Naive thymus-derived CD4-positive, alpha-beta T cell (primary cell): ENCODE measurements at regions of chr12 and their contacts with region 1.

Region 1: DNA sequence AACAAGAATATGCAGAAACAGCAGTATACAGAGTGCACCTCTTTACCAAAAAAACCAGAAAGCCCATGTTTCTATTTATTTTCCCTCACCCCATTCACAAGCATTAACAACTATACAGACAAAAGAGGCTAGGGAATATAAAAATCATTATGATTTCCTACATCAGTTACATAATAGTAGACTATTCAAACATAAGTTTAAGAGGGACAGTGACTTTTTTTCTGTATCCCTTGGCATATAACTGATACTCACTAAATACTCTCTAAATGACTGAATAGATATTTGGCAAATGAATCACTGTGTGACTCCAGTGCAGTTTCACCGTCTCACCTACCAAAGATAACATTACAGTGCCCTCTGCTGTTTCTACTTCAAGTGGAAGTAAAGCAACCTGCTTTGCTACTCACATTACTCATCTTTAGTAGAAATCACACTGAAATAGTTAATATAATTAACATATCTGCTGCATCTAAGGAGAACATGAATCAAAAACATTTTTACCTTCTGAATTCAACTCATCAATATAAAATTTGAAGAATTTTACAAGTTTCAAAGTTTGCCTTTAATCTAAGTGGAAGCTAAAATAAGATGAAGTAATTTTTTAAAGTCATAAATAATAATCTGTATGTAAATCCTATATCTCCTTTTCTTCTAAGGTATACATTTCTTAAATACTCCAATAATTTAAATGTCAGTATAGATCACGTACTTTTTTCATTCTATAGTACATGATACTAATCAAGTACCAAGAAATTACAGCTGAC is 103.8 kb downstream of the OSBPL8 start:
- DNase-seq: peak in 6 of 9 donors; percentile 15 to 49 (median 38)
- ATAC-seq: peak; percentile 78
- H3K4me3 ChIP-seq: no peak overlapping the region
- H3K4me3 Mint-ChIP-seq: peak overlapping the region in 1 of 10 donors; percentile 38
- H3K27ac ChIP-seq: no peak overlapping the region
- H3K27ac Mint-ChIP-seq: peak overlapping the region in 3 of 9 donors; percentile 36 to 65 (median 46)
- H3K4me1 ChIP-seq: peaks cover 14 to 16% of the 10 kb centered on the region in 2 donors
- H3K4me1 Mint-ChIP-seq: peaks cover 10 to 58% (median 37%) of the 10 kb centered on the region in 7 donors
- H3K27me3 ChIP-seq: no peaks in the 10 kb centered on the region
- H3K27me3 Mint-ChIP-seq: no peaks in the 10 kb centered on the region

Region 2: DNA sequence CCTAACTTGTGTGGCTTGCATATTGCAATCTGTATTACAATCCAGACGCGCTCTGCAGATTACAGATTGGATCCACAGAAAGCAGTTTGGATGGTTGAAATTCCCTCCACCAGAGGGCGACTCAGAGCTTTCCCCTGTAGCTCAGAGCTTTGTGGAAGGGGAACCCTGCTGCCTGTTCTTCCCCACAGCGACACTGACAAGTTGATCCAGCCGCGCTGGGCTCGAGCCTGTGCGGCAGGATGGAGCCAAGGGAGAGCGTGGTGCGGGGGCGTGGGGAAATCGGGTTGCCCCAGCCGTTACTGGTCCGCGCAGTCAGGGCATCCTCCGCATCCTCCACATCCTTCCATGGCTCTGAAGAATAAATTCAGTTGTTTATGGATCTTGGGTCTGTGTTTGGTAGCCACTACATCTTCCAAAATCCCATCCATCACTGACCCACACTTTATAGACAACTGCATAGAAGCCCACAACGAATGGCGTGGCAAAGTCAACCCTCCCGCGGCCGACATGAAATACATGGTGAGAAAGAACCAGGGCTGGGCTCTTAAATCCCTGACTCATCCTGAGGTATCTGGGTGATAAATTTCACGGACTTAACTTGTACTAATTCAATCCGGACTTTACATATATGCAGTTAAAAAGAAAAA is 1121.3 kb before region 1 on chr12 and contains the start of gene GLIPR1L1:
- CTCF ChIA-PET with region 1: no interaction called
- POLR2A ChIA-PET with region 1: no interaction called
- intact Hi-C with region 1: loop called in 1 of 2 experiments (anchors 5 kb)
- DNase-seq: peak; percentile 58 to 79 (median 74)
- ATAC-seq: peak; percentile 91
- H3K4me3 ChIP-seq: no peak within 1 kb of the TSS
- H3K4me3 Mint-ChIP-seq: peak within 1 kb of the TSS; percentile 18 to 80 (median 74)
- H3K27ac ChIP-seq: no peak within 1 kb of the TSS
- H3K27ac Mint-ChIP-seq: peak within 1 kb of the TSS in 1 of 9 donors; percentile 3
- H3K4me1 ChIP-seq: peaks cover 0 to 5% of the 10 kb centered on the region in 2 donors
- H3K4me1 Mint-ChIP-seq: peaks cover 11 to 29% (median 18%) of the 10 kb centered on the region in 7 donors
- H3K27me3 ChIP-seq: peaks cover 0 to 6% of the 10 kb centered on the region in 2 donors
- H3K27me3 Mint-ChIP-seq: peaks cover 16 to 56% (median 31%) of the 10 kb centered on the region in 5 donors
- total RNA-seq, gene GLIPR1L1: not detected

Region 3: GRCh38 chr12:75526655-75527511 is 928.9 kb before region 1 on chr12:
- CTCF ChIA-PET with region 1: no interaction called
- POLR2A ChIA-PET with region 1: no interaction called
- intact Hi-C with region 1: loop called in 1 of 2 experiments (anchors 1 kb)
- DNase-seq: peak in 6 of 9 donors; percentile 10 to 26 (median 18)
- ATAC-seq: peak; percentile 53
- H3K4me3 ChIP-seq: no peak overlapping the region
- H3K4me3 Mint-ChIP-seq: no peak overlapping the region
- H3K27ac ChIP-seq: no peak overlapping the region
- H3K27ac Mint-ChIP-seq: peak overlapping the region in 1 of 9 donors; percentile 21
- H3K4me1 ChIP-seq: no peaks in the 10 kb centered on the region
- H3K4me1 Mint-ChIP-seq: peaks cover 0 to 7% (median 2%) of the 10 kb centered on the region in 7 donors
- H3K27me3 ChIP-seq: no peaks in the 10 kb centered on the region
- H3K27me3 Mint-ChIP-seq: peaks cover 32 to 40% (median 38%) of the 10 kb centered on the region in 5 donors

Region 4: GRCh38 chr12:76158518-76159321 is 297.0 kb before region 1 on chr12:
- CTCF ChIA-PET with region 1: no interaction called
- POLR2A ChIA-PET with region 1: interaction called, 6 read pairs
- intact Hi-C with region 1: loop called (anchors 1 to 5 kb)
- DNase-seq: peak; percentile 9 to 88 (median 37)
- ATAC-seq: peak; percentile 95
- H3K4me3 ChIP-seq: no peak overlapping the region
- H3K4me3 Mint-ChIP-seq: peak overlapping the region; percentile 0 to 88 (median 69)
- H3K27ac ChIP-seq: no peak overlapping the region
- H3K27ac Mint-ChIP-seq: peak overlapping the region in 4 of 9 donors; percentile 54 to 80 (median 68)
- H3K4me1 ChIP-seq: no peaks in the 10 kb centered on the region
- H3K4me1 Mint-ChIP-seq: peaks cover 0 to 18% (median 10%) of the 10 kb centered on the region in 7 donors
- H3K27me3 ChIP-seq: no peaks in the 10 kb centered on the region
- H3K27me3 Mint-ChIP-seq: peaks cover 0 to 3% (median 0%) of the 10 kb centered on the region in 5 donors

Region 5: DNA sequence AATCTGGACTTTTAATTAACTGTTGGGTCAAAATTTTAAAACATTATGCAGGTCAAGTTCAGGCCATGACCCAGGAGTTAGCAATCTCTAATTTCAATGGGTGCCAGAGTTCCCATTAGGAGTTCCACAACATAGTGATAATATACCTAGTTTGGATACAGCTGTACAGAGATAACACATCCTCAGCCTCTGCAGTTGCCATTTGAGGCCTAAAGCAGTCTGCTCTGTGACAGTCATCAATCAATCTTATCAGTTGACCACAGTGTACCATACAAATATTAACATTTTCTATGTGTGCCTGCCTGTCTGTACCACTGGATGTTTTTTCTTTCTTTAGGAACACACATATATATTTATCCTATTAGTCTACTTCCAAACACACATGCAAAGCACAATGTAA is 53.5 kb before region 1 on chr12:
- CTCF ChIA-PET with region 1: interaction called, 4 read pairs
- POLR2A ChIA-PET with region 1: no interaction called
- intact Hi-C with region 1: loop called in 1 of 2 experiments (anchors 10 kb)
- DNase-seq: no peak
- ATAC-seq: no peak
- H3K4me3 ChIP-seq: no peak overlapping the region
- H3K4me3 Mint-ChIP-seq: no peak overlapping the region
- H3K27ac ChIP-seq: no peak overlapping the region
- H3K27ac Mint-ChIP-seq: no peak overlapping the region
- H3K4me1 ChIP-seq: no peaks in the 10 kb centered on the region
- H3K4me1 Mint-ChIP-seq: peaks cover 0 to 4% (median 0%) of the 10 kb centered on the region in 7 donors
- H3K27me3 ChIP-seq: no peaks in the 10 kb centered on the region
- H3K27me3 Mint-ChIP-seq: no peaks in the 10 kb centered on the region